ENCODE measurements at regions of chr9 and their contacts with region 1.

Region 1: DNA sequence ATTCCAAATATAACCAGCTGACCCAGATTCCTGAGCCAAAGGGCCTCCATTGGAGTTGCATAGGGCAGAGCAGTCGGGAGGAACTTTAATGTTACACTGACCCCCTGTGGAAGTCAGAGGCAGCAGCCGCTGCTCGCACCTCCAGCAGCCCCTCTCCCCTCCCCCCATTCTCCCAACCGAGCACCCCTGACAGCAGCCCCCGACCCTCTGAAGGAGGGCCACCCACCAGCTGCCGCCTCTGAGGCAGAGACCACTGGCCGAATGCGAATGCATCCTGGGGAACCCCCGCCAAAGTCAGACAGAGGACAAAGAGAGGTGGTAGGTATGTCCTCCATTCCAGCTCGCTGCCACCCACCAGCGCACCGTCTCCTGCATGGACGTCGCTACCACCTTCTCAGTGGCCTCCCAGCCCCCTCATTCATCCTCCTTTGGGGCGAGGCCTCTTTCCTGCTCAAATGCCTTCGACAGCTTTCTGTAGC is 231.0 kb downstream of the CDK5RAP2 start:
- DNase-seq: peak in 2 of 5 donors; percentile 20 to 27
- ATAC-seq: peak; percentile 42 to 89 (median 86)
- H3K4me3 ChIP-seq: no peak overlapping the region
- H3K27ac ChIP-seq: no peak overlapping the region
- H3K4me1 ChIP-seq: peaks cover 0 to 8% (median 0%) of the 10 kb centered on the region in 12 donors
- H3K27me3 ChIP-seq: no peaks in the 10 kb centered on the region
- CTCF ChIP-seq: peak; percentile 34 to 63 (median 54)
- POLR2A ChIP-seq: no peak

Region 2: DNA sequence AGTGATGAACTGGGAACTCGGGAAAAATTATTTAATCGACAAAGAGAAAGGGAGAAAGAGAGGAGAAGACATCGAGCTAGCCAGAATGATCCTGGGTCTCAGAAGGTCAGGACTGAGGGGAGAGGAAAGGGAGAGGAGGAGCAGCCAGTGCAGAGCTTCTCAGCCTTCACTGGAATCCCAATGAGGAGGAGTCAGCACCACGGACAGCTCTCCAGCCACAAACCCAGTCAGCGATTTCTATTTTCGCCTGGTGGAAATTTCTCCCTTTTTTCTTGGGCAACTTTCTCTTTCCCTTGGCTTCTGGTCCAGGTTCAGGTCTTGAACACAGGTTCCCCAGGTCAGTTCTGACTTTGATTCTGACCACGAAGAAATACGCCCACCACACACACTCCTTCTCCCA is 978.2 kb before region 1 on chr9:
- intact Hi-C with region 1: loop called in 4 of 10 experiments (anchors 5 to 10 kb)
- DNase-seq: peak; percentile 18 to 60 (median 30)
- ATAC-seq: no peak
- H3K4me3 ChIP-seq: no peak overlapping the region
- H3K27ac ChIP-seq: no peak overlapping the region
- H3K4me1 ChIP-seq: peaks cover 0 to 13% (median 0%) of the 10 kb centered on the region in 12 donors
- H3K27me3 ChIP-seq: peaks cover 0 to 37% (median 29%) of the 10 kb centered on the region in 9 donors
- CTCF ChIP-seq: no peak
- POLR2A ChIP-seq: no peak

Region 3: DNA sequence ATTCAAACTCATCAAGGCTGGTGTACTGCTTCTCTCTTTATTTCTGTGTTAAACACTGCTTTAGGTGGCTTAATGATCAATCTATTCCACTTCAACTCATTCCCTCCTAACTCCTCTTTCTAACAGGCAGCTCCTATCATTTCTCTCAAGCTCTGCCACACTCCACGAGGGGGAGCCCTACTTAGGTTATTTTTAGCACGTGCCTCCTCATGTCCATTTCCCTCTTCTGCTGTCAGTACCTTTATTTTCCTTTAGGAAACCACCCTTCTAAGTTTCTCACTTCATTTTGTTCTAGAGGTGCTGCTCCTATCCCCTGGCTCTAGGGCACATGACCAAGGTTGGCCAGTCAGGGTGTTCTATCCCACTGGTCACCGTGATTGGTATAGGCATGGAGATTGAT is 973.1 kb before region 1 on chr9:
- intact Hi-C with region 1: loop called in 4 of 10 experiments (anchors 5 to 10 kb)
- DNase-seq: no peak
- ATAC-seq: no peak
- H3K4me3 ChIP-seq: no peak overlapping the region
- H3K27ac ChIP-seq: no peak overlapping the region
- H3K4me1 ChIP-seq: no peaks in the 10 kb centered on the region
- H3K27me3 ChIP-seq: peaks cover 0 to 7% (median 0%) of the 10 kb centered on the region in 9 donors
- CTCF ChIP-seq: peak in 9 of 12 donors; percentile 9 to 44 (median 21)
- POLR2A ChIP-seq: no peak

Region 4: GRCh38 chr9:119556129-119556875 is 792.7 kb before region 1 on chr9:
- intact Hi-C with region 1: loop called in 8 of 10 experiments (anchors 2 to 10 kb)
- DNase-seq: peak; percentile 63 to 85 (median 66)
- ATAC-seq: peak; percentile 58 to 96 (median 87)
- H3K4me3 ChIP-seq: peak overlapping the region in 9 of 12 donors; percentile 19 to 52 (median 37)
- H3K27ac ChIP-seq: no peak overlapping the region
- H3K4me1 ChIP-seq: peaks cover 0 to 12% (median 1%) of the 10 kb centered on the region in 12 donors
- H3K27me3 ChIP-seq: peaks cover 0 to 20% (median 0%) of the 10 kb centered on the region in 9 donors
- CTCF ChIP-seq: peak; percentile 79 to 97 (median 92)
- POLR2A ChIP-seq: no peak

Region 5: DNA sequence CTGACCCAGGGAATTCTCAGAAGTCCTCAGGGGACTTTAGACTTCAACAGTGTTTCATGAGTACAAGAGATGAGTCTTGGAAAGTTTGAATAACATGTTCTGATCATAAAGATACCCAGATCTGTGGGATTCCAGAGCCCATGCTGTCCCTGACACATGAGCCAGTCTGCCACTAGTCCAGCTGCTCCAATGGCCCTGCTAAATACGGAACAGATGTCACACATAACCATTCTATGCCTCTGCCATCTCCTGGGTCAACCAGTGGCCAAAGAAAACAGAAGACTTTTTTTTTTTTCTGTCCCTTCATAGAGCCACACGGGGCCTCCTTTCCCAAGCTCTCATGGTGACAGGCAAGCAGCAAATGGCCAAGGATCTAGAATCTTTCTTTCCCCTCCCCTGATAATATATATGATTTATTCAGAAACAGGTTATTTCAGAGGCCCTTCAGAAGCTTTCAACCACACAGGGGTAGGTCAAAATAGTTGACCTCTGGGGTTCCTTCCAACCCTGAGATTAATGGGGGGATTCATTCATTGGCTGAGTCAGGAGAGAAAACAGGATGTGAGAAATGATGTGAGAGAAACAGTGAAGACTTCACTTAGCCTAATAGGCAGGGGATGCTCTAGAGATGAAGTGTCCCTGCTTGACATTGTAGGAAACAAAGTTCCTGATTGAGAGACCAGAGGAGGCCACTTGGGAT is 136.7 kb before region 1 on chr9:
- intact Hi-C with region 1: no loop called
- DNase-seq: no peak
- ATAC-seq: no peak
- H3K4me3 ChIP-seq: no peak overlapping the region
- H3K27ac ChIP-seq: no peak overlapping the region
- H3K4me1 ChIP-seq: no peaks in the 10 kb centered on the region
- H3K27me3 ChIP-seq: no peaks in the 10 kb centered on the region
- CTCF ChIP-seq: no peak
- POLR2A ChIP-seq: no peak